ENCODE measurements at regions of chr12 and their contacts with region 1.

Region 1: DNA sequence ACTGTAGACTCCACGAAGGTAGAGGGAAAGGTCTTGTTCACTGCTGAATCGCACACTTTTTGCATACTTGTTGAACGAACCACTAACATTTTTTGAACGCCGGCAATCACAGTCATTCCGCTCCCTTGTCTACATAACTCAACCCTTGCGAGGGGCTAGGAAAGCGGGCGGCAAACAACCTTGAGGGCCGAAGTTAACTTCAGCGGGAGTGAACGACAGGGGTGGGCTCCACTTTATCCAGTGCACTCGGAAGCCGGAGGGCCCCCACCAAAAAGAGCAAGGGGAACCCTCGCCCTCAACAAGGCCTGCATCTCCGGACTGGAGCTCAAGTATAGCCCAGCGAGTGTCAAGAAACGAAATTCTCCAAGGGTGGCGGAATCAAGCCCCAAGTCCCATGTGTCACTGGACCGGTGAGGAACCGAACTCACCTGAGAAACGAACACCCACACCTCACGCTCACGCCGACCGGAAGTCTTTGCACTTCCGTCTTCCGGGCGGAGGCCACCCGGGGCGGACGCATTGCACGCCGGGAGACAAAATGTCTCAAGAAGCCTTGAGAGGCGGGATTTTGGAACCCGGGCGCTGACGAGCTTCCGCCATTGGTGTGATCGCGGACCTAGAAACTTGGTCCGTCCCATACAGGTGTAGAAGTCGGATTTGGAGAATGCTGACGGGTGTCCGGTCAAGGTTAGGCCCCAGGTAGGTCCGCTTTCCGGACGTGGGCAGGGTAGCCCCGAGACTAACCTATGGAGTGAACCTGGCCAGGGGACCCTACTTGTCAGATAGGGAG is at the start of gene LLPH:
- DNase-seq: peak; percentile 94
- H3K4me3 Mint-ChIP-seq: peak within 1 kb of the TSS; percentile 96
- H3K27ac Mint-ChIP-seq: peak within 1 kb of the TSS; percentile 95
- H3K4me1 Mint-ChIP-seq: peaks cover 53% of the 10 kb centered on the region
- H3K27me3 Mint-ChIP-seq: no peaks in the 10 kb centered on the region
- total RNA-seq, gene LLPH: 25.6 to 26.0 TPM

Region 2: DNA sequence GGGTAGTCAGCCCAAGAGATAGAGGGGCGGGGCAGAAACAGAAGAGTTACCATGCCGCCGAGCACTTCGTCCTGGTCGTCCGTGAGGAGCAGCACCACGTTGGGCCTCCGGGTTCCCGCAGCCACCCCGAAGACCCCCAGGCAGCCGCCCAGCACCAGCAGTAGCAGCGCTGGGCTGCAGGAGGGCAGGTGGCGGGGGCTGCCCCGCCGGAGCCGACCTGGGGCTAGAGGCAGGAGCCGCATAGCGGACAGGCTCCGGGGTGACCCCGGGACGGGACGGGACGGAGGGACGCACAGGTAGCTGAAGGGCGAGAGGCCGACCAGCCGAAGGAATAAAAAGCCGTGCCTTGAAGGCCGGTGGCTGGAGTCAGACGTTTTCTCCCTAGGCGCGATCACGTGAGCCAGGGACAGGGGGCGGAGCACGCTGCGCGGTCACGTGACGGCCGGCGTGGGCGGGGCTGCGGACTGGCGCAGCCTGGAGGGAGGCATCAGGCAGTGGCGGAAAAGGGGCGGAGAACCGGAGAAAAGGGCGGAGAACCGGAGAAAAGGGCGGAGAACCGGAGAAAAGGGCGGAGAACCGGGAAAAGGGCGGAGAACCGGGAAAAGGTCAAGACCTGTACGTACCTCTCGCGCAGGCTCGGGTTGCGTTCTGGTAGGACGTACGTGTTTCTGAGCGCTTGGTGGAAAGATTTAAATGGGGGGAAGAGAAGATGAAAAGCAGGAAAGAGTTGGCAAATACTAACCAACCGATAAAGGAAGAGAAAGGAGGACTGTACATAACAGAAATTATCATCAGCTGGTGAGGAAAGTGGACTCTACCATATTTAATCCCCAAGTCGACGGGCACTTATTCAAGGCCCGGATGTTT is 1371.2 kb before region 1 on chr12 and contains the start of gene GNS:
- CTCF ChIA-PET with region 1: no interaction called
- intact Hi-C with region 1: loop called (anchors 5 kb)
- DNase-seq: peak; percentile 98
- H3K4me3 Mint-ChIP-seq: peak within 1 kb of the TSS; percentile 83
- H3K27ac Mint-ChIP-seq: peak within 1 kb of the TSS; percentile 85
- H3K4me1 Mint-ChIP-seq: peaks cover 41% of the 10 kb centered on the region
- H3K27me3 Mint-ChIP-seq: no peaks in the 10 kb centered on the region
- total RNA-seq, gene GNS: 14.3 to 14.6 TPM

Region 3: DNA sequence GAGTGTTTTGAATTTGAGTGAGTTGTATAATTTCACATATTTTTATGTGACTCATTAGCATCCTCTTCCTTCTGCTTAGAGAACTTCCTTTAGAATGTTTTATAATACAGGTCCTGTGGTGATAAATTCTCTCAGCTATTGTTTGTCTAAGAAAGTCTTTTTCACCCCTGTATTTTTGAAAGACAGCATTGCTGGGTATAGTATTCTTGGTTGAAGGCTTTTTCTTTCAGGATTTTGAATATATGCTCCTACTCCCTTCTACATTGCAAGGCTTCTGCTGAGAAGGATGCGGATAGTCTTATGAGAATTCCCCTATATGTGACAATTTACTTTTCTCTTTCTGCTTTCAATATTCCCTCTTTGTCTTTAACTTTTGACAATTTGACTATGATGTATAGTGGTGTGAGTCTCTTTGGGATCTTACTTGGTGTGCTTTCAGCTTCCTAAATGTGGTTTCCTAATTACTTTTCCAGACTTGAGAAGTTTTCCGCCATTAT is 425.0 kb before region 1 on chr12:
- CTCF ChIA-PET with region 1: no interaction called
- intact Hi-C with region 1: no loop called
- DNase-seq: no peak
- H3K4me3 Mint-ChIP-seq: no peak overlapping the region
- H3K27ac Mint-ChIP-seq: no peak overlapping the region
- H3K4me1 Mint-ChIP-seq: no peaks in the 10 kb centered on the region
- H3K27me3 Mint-ChIP-seq: peaks cover 3% of the 10 kb centered on the region

Region 4: DNA sequence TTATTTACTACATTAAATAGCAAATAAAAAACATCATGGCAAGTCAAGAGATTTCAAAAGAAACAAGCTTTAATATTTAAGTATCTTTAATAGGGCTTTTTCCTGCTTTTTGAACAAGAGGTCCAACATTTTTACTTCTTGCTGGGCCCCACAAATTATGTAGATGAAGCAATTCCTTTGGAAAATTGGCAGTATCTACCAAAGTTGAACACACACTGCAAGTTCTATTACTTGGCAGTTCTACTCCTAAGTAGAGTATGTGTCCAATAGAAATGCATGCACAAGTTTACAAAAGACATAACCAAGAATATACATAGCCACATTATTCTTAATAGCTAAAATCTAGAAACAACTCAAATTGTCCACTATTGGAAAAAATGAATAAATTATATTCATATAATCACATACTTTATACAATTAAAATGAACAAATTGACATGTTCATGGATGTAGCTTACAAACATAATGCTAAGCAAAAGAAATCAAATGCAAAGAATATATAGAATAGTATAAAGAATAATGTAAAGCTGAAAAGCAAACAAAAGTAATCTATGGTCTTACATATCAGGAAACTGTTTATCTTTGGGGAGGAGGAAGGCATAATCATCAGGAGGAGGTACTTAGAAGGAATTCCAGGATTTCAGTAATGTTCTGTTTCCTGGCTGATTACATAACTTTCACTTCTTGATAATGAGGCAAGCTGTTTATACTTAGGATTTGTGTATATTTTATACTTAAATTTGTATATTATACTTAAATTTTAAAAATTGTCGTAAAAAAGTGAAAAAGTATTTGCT is 45.8 kb after region 1 on chr12:
- CTCF ChIA-PET with region 1: no interaction called
- intact Hi-C with region 1: no loop called
- DNase-seq: no peak
- H3K4me3 Mint-ChIP-seq: no peak overlapping the region
- H3K27ac Mint-ChIP-seq: no peak overlapping the region
- H3K4me1 Mint-ChIP-seq: no peaks in the 10 kb centered on the region
- H3K27me3 Mint-ChIP-seq: peaks cover 7% of the 10 kb centered on the region

Region 5: DNA sequence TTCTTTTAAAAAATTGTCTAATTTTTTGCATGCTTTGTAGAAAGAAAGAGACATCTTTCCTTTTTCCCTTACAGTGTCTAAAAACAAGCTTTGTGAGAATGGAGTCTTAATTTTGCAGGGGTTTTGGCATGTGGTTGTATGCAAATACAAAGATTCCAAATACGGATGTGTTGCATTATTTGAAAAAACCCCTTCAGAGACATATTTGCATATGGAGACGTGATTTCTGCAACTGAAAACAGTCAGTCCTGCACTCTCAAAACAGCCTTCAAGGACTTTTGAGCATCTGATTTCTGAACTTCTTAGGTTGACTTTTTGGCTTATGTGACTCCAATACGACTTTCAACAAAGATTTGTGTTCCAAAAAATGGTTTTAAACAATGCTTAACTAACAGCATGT is 66.3 kb after region 1 on chr12:
- CTCF ChIA-PET with region 1: no interaction called
- intact Hi-C with region 1: loop called (anchors 2 kb)
- DNase-seq: peak; percentile 17
- H3K4me3 Mint-ChIP-seq: no peak overlapping the region
- H3K27ac Mint-ChIP-seq: peak overlapping the region; percentile 33
- H3K4me1 Mint-ChIP-seq: peaks cover 10% of the 10 kb centered on the region
- H3K27me3 Mint-ChIP-seq: peaks cover 22% of the 10 kb centered on the region

Region 6: GRCh38 chr12:66235626-66236281 is 105.3 kb after region 1 on chr12:
- CTCF ChIA-PET with region 1: interaction called, 5 read pairs
- intact Hi-C with region 1: loop called (anchors 1 kb)
- DNase-seq: no peak
- H3K4me3 Mint-ChIP-seq: peak overlapping the region; percentile 55
- H3K27ac Mint-ChIP-seq: no peak overlapping the region
- H3K4me1 Mint-ChIP-seq: peaks cover 4% of the 10 kb centered on the region
- H3K27me3 Mint-ChIP-seq: peaks cover 35% of the 10 kb centered on the region

Region 7: DNA sequence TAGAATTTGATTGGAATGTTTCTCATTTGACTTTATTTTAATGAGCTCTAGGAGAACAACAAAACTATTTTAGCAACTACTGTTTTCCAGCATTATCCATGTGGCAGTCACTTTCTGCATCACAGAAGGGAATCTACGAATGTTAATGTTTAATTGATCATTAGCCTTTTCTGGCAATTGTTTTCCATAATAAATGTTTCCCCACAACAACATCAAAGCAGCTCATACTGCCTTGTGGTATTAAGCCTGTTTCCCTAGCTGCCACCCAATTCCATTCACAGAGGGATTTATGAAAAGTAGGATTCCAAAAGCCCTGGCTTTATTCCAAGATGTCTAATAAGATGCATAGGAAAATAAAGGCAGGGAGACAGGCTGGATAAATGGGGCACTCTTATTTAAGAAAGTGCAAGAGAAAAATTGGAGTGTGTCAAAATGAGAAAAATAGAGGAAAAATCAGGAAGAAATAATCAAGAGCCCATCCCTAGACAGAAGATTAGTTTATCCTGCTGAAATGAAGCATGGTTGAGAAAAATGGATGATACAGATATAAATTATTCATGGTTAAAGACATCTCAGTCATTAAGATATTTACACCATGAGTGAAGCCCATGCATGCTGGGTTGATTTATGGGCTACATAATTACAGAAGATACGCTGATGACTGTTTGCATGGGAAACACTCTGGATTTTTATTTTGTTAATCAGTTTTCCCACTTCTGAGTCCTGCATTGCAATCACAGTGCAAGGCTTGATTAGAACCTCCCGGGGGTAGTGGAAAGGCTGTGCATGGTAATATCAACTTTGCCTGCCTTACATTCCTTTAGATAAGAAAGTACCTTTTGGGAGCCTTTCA is 352.1 kb after region 1 on chr12:
- CTCF ChIA-PET with region 1: no interaction called
- intact Hi-C with region 1: no loop called
- DNase-seq: no peak
- H3K4me3 Mint-ChIP-seq: no peak overlapping the region
- H3K27ac Mint-ChIP-seq: no peak overlapping the region
- H3K4me1 Mint-ChIP-seq: no peaks in the 10 kb centered on the region
- H3K27me3 Mint-ChIP-seq: no peaks in the 10 kb centered on the region

Region 8: GRCh38 chr12:66708704-66709456 is 578.4 kb after region 1 on chr12:
- CTCF ChIA-PET with region 1: no interaction called
- intact Hi-C with region 1: loop called (anchors 5 kb)
- DNase-seq: no peak
- H3K4me3 Mint-ChIP-seq: peak overlapping the region; percentile 32
- H3K27ac Mint-ChIP-seq: peak overlapping the region; percentile 7
- H3K4me1 Mint-ChIP-seq: peaks cover 33% of the 10 kb centered on the region
- H3K27me3 Mint-ChIP-seq: no peaks in the 10 kb centered on the region

Measured in activated naive CD4-positive, alpha-beta T cell treated with anti-CD3 and anti-CD28 coated beads for 36 hours (primary cell).